HAP-1 (cell line): ENCODE measurements at regions of chr4 and their contacts with region 1.

Region 1: DNA sequence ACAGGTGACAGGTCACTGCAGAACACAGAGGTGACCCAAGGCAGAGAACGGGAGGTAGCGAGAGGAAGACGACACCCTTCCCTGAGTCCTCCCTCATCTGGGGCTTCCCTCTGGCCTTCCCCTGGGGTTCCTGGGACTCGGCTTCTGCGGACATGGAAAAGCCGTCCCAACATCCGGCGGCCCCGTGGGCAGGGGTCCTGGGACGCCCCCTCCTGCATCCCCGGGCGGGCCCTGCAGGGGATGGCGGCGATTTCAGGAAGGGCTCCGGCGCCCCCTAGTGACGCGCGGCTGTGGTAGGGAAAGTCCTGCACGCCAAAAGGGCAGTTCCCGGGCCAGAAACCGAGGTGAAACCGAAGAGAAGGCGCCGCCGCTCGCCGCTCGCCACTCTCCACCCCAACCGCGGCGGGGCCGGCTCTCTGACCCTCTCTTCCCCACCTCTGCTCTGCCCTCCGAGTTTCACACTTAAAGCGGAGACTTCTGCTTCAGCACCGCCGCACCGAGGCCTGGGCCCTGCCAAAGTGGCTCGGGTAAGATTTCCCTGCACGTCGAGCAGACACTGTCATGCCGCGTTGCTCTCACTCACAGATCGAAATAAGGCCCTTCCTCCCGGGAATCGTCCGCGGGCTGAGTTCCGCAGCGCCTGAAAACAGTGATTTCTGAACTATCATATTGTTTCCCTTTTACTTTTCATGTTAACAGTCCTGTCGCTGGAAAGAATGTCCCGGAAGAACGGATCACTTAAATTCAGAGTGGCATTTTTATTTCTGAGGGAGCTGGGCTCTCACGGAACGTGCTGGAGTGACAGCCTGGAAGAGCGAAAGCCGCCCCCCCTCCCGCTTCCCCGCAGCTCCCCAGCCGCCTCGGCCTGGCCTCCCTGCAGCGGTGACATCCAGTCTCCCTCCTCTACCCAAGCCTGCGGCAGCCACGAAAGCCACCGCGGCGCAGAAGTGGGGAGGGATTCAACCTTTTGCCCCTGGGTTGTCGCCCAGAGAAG is 110.6 kb downstream of the DCTD start:
- DNase-seq: peak; percentile 65 to 92
- H3K4me3 ChIP-seq: peak overlapping the region; percentile 19
- H3K4me1 ChIP-seq: peaks cover 24% of the 10 kb centered on the region
- H3K27me3 ChIP-seq: no peaks in the 10 kb centered on the region

Region 2: DNA sequence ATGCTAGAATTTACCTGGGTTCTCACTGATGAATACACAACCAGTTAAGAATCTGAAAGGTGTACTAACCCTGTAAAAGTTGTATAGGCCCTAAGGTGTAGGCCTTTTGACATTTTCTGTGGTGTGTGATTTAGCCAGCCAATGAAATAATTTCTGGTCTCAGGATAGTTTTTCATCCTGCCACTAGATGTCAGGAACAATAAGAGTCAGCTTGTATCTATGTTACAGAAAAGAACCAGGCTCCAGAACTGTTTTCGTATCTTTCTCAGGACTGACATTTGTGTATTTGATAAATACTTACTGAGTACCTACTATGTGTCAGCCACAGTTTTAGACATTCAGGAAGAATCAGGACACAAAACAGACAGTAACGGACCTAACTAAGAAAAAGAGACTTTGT is 1237.0 kb before region 1 on chr4:
- in situ Hi-C with region 1: loop called (anchors 25 kb)
- DNase-seq: peak in 1 of 2 experiments; percentile 55
- H3K4me3 ChIP-seq: no peak overlapping the region
- H3K4me1 ChIP-seq: no peaks in the 10 kb centered on the region
- H3K27me3 ChIP-seq: no peaks in the 10 kb centered on the region

Region 3: DNA sequence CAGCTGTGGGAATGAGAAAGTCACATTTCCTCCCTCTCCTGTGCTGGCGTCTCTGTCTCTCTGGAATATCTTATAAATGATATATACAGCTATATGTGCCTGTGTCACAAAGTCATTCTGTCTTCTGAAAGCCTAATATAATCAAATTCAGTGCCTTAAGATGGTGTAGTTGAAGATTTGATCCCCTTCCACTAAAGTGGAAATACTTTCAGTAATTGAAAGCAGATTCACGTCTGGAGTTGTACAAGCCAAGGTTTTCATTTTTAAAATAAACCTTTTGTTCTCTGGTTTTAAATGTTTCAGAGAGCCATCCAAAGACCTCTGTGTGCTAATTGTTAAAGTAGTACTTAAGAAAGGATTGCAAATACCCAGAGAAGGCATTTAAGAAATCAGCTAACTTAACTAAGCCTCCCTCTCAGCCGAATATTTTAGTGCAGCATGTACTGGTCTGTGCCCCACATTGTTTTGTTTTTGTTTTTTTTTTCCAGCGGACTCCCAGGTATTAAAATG is 356.6 kb before region 1 on chr4:
- in situ Hi-C with region 1: loop called (anchors 25 kb)
- DNase-seq: peak in 1 of 2 experiments; percentile 60
- H3K4me3 ChIP-seq: peak overlapping the region; percentile 44
- H3K4me1 ChIP-seq: peaks cover 25% of the 10 kb centered on the region
- H3K27me3 ChIP-seq: no peaks in the 10 kb centered on the region

Region 4: DNA sequence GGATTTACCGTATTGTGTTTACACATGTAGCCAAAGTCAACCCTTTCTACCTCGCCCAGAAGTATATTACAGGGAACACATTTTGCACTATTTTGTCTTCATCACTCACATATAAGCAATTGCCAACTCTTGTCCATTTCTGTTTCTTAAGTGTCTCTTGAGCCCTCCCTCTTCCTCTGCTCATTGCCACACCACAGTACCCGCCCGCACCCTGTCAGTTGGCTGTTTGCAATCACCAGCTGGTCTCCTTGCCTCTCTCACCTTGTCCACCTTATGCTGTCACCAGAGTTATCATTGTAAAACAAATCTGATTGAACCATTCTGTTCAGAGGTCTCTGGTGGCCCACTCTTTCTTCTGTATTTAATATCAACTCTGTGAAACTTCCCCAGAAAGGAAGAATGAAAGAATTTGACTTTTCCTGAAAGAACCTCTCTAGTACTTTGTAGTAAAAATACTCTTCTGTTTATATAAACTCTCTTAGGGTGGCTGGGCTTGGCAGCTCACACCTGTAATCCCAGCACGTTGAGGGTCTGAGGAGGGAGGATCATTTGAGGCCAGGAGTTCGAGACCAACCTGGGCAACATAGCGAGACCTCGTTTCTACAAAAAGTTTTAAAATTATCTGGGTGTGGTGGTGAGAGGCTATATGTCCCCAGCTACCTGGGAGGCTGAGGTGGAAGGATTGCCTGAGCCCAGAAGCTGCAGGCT is 748.5 kb after region 1 on chr4:
- in situ Hi-C with region 1: no loop called
- DNase-seq: no peak
- H3K4me3 ChIP-seq: no peak overlapping the region
- H3K4me1 ChIP-seq: peaks cover 3% of the 10 kb centered on the region; the same call in 1 of the 2 replicates
- H3K27me3 ChIP-seq: no peaks in the 10 kb centered on the region